HEK293 (cell line): ENCODE measurements at regions of chr14 and their contacts with region 1.

Region 1: GRCh38 chr14:72104011-72104613 is 171.9 kb downstream of the RGS6 start:
- H3K4me3 ChIP-seq: no peak overlapping the region
- H3K27ac ChIP-seq: no peak overlapping the region
- H3K4me1 ChIP-seq: no peaks in the 10 kb centered on the region
- CTCF ChIP-seq: no peak

Region 2: DNA sequence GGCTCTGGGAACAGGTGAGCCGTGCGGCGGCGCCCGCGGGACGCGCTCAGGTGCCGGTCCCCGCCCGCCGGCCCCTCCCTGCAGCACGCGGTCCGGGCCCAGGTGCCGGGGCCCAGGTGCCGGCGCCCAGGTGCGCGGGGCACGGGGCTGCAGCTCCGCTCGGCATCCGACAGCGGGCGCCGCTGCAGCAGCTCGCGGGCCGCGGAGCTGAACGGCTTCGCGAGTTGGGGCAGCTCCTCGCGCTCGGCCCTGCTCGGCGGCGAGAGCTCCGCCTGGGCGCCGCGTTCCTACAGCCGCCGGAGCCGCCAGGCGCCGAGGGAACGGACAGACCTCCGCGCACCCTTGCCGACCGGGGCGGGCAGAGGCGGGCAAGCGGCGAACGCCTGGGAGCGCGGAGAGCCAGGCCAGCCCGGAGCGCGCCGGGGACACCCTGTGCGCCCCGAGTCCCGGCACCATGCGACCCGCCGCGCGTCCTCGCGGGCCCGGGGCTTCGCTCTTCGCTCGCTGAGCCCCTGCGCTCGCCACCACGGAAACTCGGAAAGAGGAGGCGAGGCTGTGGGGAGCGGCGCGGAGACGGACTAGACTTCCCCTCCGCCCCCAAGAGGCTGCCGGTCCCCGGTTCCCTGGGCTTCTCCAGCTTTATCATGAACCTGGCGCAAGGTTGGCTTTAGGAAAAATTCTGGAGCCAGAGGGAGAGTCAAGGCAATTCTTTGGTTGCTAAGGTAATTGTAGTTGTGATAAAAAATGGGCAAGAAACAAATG is 171.7 kb before region 1 on chr14 and contains the start of gene RGS6:
- CTCF ChIA-PET with region 1: no interaction called
- POLR2A ChIA-PET with region 1: no interaction called
- H3K4me3 ChIP-seq: peak within 1 kb of the TSS; percentile 45
- H3K27ac ChIP-seq: peak within 1 kb of the TSS; percentile 37; the same call in 1 of the 2 replicates
- H3K4me1 ChIP-seq: peaks cover 3% of the 10 kb centered on the region; the same call in 1 of the 2 replicates
- CTCF ChIP-seq: no peak

Region 3: DNA sequence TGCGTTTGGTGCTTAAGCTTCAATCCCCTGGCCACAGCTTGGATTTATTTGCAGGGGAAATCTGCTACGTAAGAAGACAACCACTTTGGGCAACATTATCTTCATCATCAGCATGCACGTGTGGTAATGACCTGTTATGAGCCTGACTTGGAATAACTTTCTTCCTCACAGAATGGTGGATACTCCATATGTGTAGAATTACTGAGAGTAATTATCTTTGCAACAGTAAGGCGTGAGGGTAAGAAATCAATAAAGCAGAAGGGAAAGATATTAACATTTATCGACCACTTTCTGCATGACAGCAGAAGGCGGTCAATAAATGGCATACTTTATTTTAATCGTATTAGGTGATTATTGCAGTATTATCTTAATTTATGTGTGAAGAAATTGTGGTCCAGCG is 19.2 kb before region 1 on chr14:
- CTCF ChIA-PET with region 1: interaction called, 14 read pairs
- POLR2A ChIA-PET with region 1: no interaction called
- H3K4me3 ChIP-seq: no peak overlapping the region
- H3K27ac ChIP-seq: no peak overlapping the region
- H3K4me1 ChIP-seq: no peaks in the 10 kb centered on the region
- CTCF ChIP-seq: no peak

Region 4: GRCh38 chr14:72115964-72116363 is 11.9 kb after region 1 on chr14:
- CTCF ChIA-PET with region 1: interaction called, 10 read pairs
- POLR2A ChIA-PET with region 1: no interaction called
- H3K4me3 ChIP-seq: no peak overlapping the region
- H3K27ac ChIP-seq: no peak overlapping the region
- H3K4me1 ChIP-seq: no peaks in the 10 kb centered on the region
- CTCF ChIP-seq: no peak